Endothelial cell of umbilical vein (primary cell): ENCODE measurements at regions of chr3 and their contacts with region 1.

Region 1: GRCh38 chr3:5122030-5122740 is at the start of gene ARL8B:
- DNase-seq: peak; percentile 87
- H3K4me3 ChIP-seq: peak within 1 kb of the TSS; percentile 61 to 95 (median 79)
- H3K27ac ChIP-seq: peak within 1 kb of the TSS; percentile 75
- H3K4me1 ChIP-seq: peaks cover 10% of the 10 kb centered on the region
- H3K27me3 ChIP-seq: no peaks in the 10 kb centered on the region
- CTCF ChIP-seq: peak; percentile 93 to 99
- POLR2A ChIP-seq: peak; percentile 80
- total RNA-seq, gene ARL8B: 58.0 and 58.2 TPM in 2 replicates

Region 2: DNA sequence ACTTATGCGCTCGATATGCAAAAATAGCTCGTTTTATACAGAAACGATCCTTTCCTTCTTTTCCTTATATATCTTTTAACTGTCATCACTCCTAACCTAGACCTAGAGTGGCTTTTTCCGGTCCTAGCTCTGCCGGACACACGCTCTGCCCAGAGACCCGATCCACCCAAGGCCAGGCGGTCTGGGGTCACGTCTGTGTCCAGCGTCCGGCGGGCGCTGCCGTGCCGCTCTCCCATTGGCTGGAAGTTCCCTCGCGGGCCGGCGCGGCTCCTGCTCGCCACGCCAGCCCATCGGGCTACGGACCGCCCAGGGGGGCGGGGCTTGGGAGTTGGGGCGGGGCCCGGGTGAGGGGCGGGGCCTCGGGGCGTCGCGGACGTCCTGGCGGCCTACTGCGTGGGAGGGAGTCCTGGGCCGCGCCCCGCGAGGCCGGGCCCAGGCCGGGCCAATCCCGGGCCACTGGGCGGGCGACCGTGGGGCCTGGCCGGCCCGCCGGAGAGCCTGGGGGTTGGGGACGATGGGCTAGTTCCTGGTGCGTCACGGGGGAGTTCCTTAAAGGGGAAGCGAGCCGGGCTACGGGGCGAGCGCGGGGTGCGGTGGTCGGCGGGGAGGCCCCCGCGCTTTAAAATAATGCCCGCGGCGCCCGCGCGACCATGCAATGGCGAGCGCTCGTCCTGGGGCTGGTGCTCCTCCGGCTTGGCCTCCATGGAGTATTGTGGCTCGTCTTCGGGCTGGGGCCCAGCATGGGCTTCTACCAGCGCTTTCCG is 65.2 kb after region 1 on chr3 and contains the start of gene EDEM1:
- CTCF ChIA-PET with region 1: interaction called, 7 read pairs
- POLR2A ChIA-PET with region 1: interaction called, 3 read pairs
- dilution Hi-C with region 1: no loop called
- intact Hi-C with region 1: loop called (anchors 1 kb)
- DNase-seq: peak; percentile 98
- H3K4me3 ChIP-seq: peak within 1 kb of the TSS; percentile 82 to 88 (median 83)
- H3K27ac ChIP-seq: peak within 1 kb of the TSS; percentile 92
- H3K4me1 ChIP-seq: peaks cover 21% of the 10 kb centered on the region
- H3K27me3 ChIP-seq: no peaks in the 10 kb centered on the region
- CTCF ChIP-seq: no peak
- POLR2A ChIP-seq: peak; percentile 72
- total RNA-seq, gene EDEM1: 61.1 and 65.4 TPM in 2 replicates

Region 3: GRCh38 chr3:5194341-5195159 is 72.4 kb after region 1 on chr3:
- CTCF ChIA-PET with region 1: interaction called, 7 read pairs
- POLR2A ChIA-PET with region 1: no interaction called
- dilution Hi-C with region 1: no loop called
- intact Hi-C with region 1: loop called (anchors 2 kb)
- DNase-seq: peak; percentile 87
- H3K4me3 ChIP-seq: peak overlapping the region in 1 of 3 experiments; percentile 42
- H3K27ac ChIP-seq: peak overlapping the region; percentile 75
- H3K4me1 ChIP-seq: peaks cover 41% of the 10 kb centered on the region
- H3K27me3 ChIP-seq: no peaks in the 10 kb centered on the region
- CTCF ChIP-seq: no peak
- POLR2A ChIP-seq: no peak

Region 4: GRCh38 chr3:5357089-5357488 is 234.9 kb after region 1 on chr3:
- CTCF ChIA-PET with region 1: no interaction called
- POLR2A ChIA-PET with region 1: no interaction called
- dilution Hi-C with region 1: no loop called
- intact Hi-C with region 1: no loop called
- DNase-seq: no peak
- H3K4me3 ChIP-seq: no peak overlapping the region
- H3K27ac ChIP-seq: no peak overlapping the region
- H3K4me1 ChIP-seq: no peaks in the 10 kb centered on the region
- H3K27me3 ChIP-seq: no peaks in the 10 kb centered on the region
- CTCF ChIP-seq: no peak
- POLR2A ChIP-seq: no peak